Naive thymus-derived CD4-positive, alpha-beta T cell (primary cell): ENCODE measurements at regions of chr18 and their contacts with region 1.

Region 1: GRCh38 chr18:32040936-32041335 is 22.3 kb downstream of the RNF125 start:
- DNase-seq: peak in 8 of 9 donors; percentile 19 to 66 (median 44)
- ATAC-seq: peak; percentile 87
- H3K4me3 ChIP-seq: peak overlapping the region; percentile 12
- H3K4me3 Mint-ChIP-seq: peak overlapping the region; percentile 14 to 80 (median 73)
- H3K27ac ChIP-seq: peak overlapping the region; percentile 1
- H3K27ac Mint-ChIP-seq: peak overlapping the region; percentile 0 to 85 (median 65)
- H3K4me1 ChIP-seq: peaks cover 25 to 61% of the 10 kb centered on the region in 2 donors
- H3K4me1 Mint-ChIP-seq: peaks cover 35 to 69% (median 61%) of the 10 kb centered on the region in 7 donors
- H3K27me3 ChIP-seq: no peaks in the 10 kb centered on the region
- H3K27me3 Mint-ChIP-seq: no peaks in the 10 kb centered on the region

Region 2: DNA sequence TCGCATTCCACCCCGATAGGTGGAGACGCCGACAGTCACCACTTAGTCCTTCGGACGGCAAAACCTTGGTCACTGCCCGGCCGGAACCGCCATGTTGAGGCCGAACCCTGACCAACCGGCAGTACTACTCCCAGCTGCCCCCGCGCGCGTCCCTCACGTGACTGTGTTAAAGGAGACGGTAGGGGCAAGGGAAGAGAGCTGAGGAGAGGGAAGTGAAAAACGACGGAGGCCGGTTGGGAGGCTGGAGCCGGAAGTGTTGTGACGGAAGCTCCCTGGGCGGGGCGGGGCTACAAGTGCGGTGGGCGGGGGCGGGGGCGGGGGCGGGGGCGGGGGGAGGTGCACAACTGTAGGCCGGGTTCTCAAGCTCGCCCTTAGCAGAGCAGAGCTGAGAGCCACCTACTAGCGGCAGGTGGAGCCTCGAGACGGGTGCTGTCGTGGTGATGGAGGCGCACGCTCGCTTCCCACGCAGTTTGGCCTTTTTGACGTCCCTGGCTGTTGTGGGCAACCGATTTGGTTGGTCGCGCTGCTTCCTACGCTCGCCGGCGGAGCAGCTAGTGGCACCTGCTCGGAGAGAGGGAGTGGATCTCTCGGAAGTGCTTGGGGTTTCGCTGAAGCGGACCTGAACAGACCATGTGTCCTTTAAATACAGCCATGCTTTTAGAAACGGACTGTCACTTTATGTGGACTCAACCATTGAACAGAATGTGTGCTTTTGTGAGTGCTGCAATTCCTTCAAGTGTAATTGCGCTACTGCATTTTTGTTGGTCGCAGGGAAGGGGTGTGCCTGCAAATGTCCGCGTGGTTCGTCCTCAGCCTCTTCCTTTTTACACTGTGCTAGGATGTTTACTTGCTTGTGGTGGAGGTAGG is 97.7 kb before region 1 on chr18 and contains the start of gene TRAPPC8:
- CTCF ChIA-PET with region 1: no interaction called
- POLR2A ChIA-PET with region 1: interaction called, 3 read pairs
- intact Hi-C with region 1: loop called (anchors 1 kb)
- DNase-seq: peak; percentile 81 to 94 (median 91)
- ATAC-seq: peak; percentile 91
- H3K4me3 ChIP-seq: peak within 1 kb of the TSS; percentile 98
- H3K4me3 Mint-ChIP-seq: peak within 1 kb of the TSS; percentile 95 to 100 (median 98)
- H3K27ac ChIP-seq: peak within 1 kb of the TSS; percentile 97
- H3K27ac Mint-ChIP-seq: peak within 1 kb of the TSS; percentile 95 to 100 (median 99)
- H3K4me1 ChIP-seq: peaks cover 17 to 26% of the 10 kb centered on the region in 2 donors
- H3K4me1 Mint-ChIP-seq: peaks cover 28 to 54% (median 44%) of the 10 kb centered on the region in 7 donors
- H3K27me3 ChIP-seq: no peaks in the 10 kb centered on the region
- H3K27me3 Mint-ChIP-seq: no peaks in the 10 kb centered on the region
- total RNA-seq, gene TRAPPC8: 31.0 to 62.7 (median 44.3) TPM

Region 3: GRCh38 chr18:32026491-32027086 is 14.3 kb before region 1 on chr18:
- CTCF ChIA-PET with region 1: interaction called, 16 read pairs
- POLR2A ChIA-PET with region 1: interaction called, 9 read pairs
- intact Hi-C with region 1: loop called in 1 of 2 experiments (anchors 1 kb)
- DNase-seq: no peak
- ATAC-seq: no peak
- H3K4me3 ChIP-seq: no peak overlapping the region
- H3K4me3 Mint-ChIP-seq: peak overlapping the region; percentile 50 to 92 (median 74)
- H3K27ac ChIP-seq: no peak overlapping the region
- H3K27ac Mint-ChIP-seq: peak overlapping the region in 8 of 9 donors; percentile 3 to 89 (median 77)
- H3K4me1 ChIP-seq: peaks cover 51 to 61% of the 10 kb centered on the region in 2 donors
- H3K4me1 Mint-ChIP-seq: peaks cover 47 to 92% (median 81%) of the 10 kb centered on the region in 7 donors
- H3K27me3 ChIP-seq: no peaks in the 10 kb centered on the region
- H3K27me3 Mint-ChIP-seq: no peaks in the 10 kb centered on the region

Region 4: GRCh38 chr18:32056613-32057358 is 15.8 kb after region 1 on chr18:
- CTCF ChIA-PET with region 1: interaction called, 7 read pairs
- POLR2A ChIA-PET with region 1: no interaction called
- intact Hi-C with region 1: loop called in 1 of 2 experiments (anchors 2 kb)
- DNase-seq: no peak
- ATAC-seq: no peak
- H3K4me3 ChIP-seq: no peak overlapping the region
- H3K4me3 Mint-ChIP-seq: peak overlapping the region in 1 of 10 donors; percentile 14
- H3K27ac ChIP-seq: no peak overlapping the region
- H3K27ac Mint-ChIP-seq: peak overlapping the region in 5 of 9 donors; percentile 7 to 71 (median 54)
- H3K4me1 ChIP-seq: peaks cover 10 to 14% of the 10 kb centered on the region in 2 donors
- H3K4me1 Mint-ChIP-seq: peaks cover 16 to 66% (median 56%) of the 10 kb centered on the region in 7 donors
- H3K27me3 ChIP-seq: no peaks in the 10 kb centered on the region
- H3K27me3 Mint-ChIP-seq: no peaks in the 10 kb centered on the region